GM12878 (cell line): ENCODE measurements at regions of chr1 and their contacts with region 1.

Region 1: DNA sequence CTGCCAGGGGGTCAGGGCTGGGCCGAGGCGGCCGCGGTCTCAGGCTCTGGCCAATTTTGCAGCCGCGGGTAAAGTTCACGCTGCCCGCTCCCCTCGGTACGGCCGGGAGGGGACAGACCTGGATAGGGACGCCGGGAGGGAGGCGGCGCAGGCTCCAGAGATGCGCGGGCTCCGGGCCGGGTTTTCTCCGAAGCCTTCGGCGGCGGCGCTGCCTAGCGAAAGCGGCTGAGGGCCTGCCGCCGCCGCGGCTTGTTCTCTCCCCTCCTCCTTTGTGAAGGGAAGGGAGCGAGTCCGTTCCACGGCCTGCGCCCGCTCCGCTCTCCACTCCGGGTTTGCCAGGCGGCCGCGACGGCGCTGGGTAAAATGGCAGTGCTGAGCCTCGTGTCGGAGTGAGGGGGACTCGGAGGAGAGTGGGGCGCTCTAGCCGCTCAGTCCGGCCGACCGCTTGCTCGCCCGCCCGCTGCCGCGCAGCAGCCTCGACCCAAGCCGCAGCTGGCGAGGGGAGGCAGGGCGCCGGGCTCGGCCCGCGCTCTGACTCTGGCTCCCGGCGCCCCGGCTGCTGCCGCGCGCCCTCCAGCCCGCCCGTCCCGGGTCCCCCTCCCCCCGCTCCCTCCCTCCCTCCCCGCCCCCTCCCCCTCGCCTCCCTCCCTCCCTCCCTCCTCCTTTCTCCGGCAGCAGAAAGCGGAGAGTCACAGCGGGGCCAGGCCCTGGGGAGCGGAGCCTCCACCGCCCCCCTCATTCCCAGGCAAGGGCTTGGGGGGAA is at the start of gene ARID1A:
- DNase-seq: peak; percentile 82
- ATAC-seq: peak; percentile 69
- H3K4me3 ChIP-seq: peak within 1 kb of the TSS; percentile 98
- H3K27ac ChIP-seq: peak within 1 kb of the TSS; percentile 98
- H3K4me1 ChIP-seq: peaks cover 13% of the 10 kb centered on the region
- H3K27me3 ChIP-seq: no peaks in the 10 kb centered on the region
- CTCF ChIP-seq: no peak
- EP300 ChIP-seq: peak in 1 of 2 experiments; percentile 74; a peak in 1 of 4 replicates
- POLR2A ChIP-seq: peak; percentile 97
- RAD21 ChIP-seq: peak; percentile 27; the same call in 1 of the 2 replicates
- polyA plus RNA-seq, gene ARID1A: 10.0 to 24.5 TPM

Region 2: GRCh38 chr1:26614655-26615411 is 80.7 kb before region 1 on chr1:
- CTCF ChIA-PET with region 1: interaction called, 3 read pairs
- POLR2A ChIA-PET with region 1: interaction called, 5 read pairs
- RAD21 ChIA-PET with region 1: interaction called, 7 read pairs
- SMC1A ChIA-PET with region 1: interaction called, 12 read pairs
- in situ Hi-C with region 1: no loop called
- intact Hi-C with region 1: no loop called
- DNase-seq: no peak
- ATAC-seq: peak; percentile 46; the same call in 2 of the 3 replicates
- H3K4me3 ChIP-seq: no peak overlapping the region
- H3K27ac ChIP-seq: no peak overlapping the region
- H3K4me1 ChIP-seq: peaks cover 13% of the 10 kb centered on the region
- H3K27me3 ChIP-seq: no peaks in the 10 kb centered on the region
- CTCF ChIP-seq: no peak
- EP300 ChIP-seq: no peak
- POLR2A ChIP-seq: no peak
- RAD21 ChIP-seq: no peak

Region 3: DNA sequence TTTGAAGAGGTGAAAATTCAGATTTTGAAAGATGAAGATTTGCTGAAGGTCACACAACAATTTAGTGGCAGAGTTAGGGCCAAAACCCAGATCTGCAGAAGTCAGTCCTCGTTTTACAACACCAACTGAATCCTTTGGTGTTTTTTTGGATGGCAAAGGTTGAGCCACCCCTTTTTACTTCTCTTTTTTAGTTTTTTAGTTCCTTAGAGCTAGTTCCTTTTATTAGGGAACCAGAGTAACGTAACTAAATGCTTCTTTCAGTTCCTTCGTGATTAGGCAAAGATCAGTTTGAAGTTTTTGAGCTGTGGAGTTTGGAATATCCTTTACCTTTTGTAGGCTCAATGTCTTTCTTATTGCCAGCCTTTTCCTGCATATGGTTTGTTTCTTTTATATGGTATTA is 67.6 kb before region 1 on chr1:
- CTCF ChIA-PET with region 1: interaction called, 6 read pairs
- POLR2A ChIA-PET with region 1: interaction called, 13 read pairs
- RAD21 ChIA-PET with region 1: interaction called, 25 read pairs
- SMC1A ChIA-PET with region 1: interaction called, 10 read pairs
- in situ Hi-C with region 1: no loop called
- intact Hi-C with region 1: no loop called
- DNase-seq: no peak
- ATAC-seq: peak; percentile 60
- H3K4me3 ChIP-seq: no peak overlapping the region
- H3K27ac ChIP-seq: peak overlapping the region; percentile 64
- H3K4me1 ChIP-seq: peaks cover 11% of the 10 kb centered on the region
- H3K27me3 ChIP-seq: no peaks in the 10 kb centered on the region
- CTCF ChIP-seq: no peak
- EP300 ChIP-seq: no peak
- POLR2A ChIP-seq: no peak
- RAD21 ChIP-seq: no peak

Region 4: DNA sequence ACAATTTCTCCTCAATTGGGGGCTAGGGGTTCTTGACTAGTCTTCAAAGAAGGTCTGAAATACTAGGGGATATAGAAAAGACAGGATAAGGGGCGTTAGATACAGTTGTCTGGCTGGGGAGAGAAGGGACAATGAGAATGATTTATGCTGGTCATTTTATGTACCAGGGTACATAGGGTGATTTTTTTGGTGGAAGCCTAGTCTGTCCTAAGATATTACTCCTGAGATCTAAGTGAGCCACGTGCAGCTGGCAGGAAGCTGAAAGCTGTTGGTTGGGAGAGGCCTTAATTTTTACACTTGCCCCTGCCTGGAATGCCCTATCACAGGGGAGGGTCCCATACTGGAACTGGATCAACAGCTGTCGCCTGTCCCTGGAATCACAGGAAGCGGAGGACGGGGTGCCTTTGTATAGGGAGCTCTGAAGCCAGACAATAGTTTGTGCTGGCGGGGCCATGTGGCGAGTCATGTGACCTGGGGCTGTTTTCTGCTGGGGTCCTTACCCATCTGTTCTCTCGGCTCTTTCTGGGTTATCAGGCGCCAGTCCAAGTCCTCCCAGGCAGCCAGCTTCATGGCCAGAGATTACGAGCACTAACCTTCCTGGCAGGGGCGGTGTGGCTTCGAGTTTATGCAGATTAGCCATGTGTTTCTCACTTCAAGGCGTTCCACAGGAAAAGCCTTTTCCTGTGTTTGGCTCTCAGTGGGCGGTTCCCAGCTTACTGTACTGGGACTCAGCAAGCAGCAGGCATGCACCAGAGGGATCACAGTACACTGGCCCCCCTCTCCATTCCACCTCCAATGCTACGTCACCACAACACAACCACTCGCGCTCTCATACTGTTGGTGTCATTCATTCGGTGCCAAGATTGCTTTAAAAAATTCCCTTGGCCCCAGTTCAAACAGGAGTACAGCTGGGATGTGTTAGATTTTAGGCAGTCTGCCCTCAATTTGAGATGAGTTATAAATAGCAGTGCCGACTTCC is 27.8 kb after region 1 on chr1:
- CTCF ChIA-PET with region 1: interaction called, 50 read pairs
- POLR2A ChIA-PET with region 1: interaction called, 23 read pairs
- RAD21 ChIA-PET with region 1: interaction called, 15 read pairs
- SMC1A ChIA-PET with region 1: interaction called, 128 read pairs
- in situ Hi-C with region 1: no loop called
- intact Hi-C with region 1: no loop called
- DNase-seq: no peak
- ATAC-seq: peak; percentile 61
- H3K4me3 ChIP-seq: peak overlapping the region; percentile 49
- H3K27ac ChIP-seq: peak overlapping the region; percentile 72
- H3K4me1 ChIP-seq: peaks cover 53% of the 10 kb centered on the region
- H3K27me3 ChIP-seq: no peaks in the 10 kb centered on the region
- CTCF ChIP-seq: no peak
- EP300 ChIP-seq: no peak
- POLR2A ChIP-seq: 0 out of 2 replicates have a peak, but pooled peaks have one; percentile 36
- RAD21 ChIP-seq: no peak

Region 5: GRCh38 chr1:26730695-26731094 is 35.2 kb after region 1 on chr1:
- CTCF ChIA-PET with region 1: interaction called, 50 read pairs
- POLR2A ChIA-PET with region 1: interaction called, 23 read pairs
- RAD21 ChIA-PET with region 1: interaction called, 12 read pairs
- SMC1A ChIA-PET with region 1: interaction called, 128 read pairs
- in situ Hi-C with region 1: no loop called
- intact Hi-C with region 1: no loop called
- DNase-seq: no peak
- ATAC-seq: no peak
- H3K4me3 ChIP-seq: no peak overlapping the region
- H3K27ac ChIP-seq: no peak overlapping the region
- H3K4me1 ChIP-seq: peaks cover 17% of the 10 kb centered on the region
- H3K27me3 ChIP-seq: no peaks in the 10 kb centered on the region
- CTCF ChIP-seq: no peak
- EP300 ChIP-seq: no peak
- POLR2A ChIP-seq: no peak
- RAD21 ChIP-seq: no peak

Region 6: DNA sequence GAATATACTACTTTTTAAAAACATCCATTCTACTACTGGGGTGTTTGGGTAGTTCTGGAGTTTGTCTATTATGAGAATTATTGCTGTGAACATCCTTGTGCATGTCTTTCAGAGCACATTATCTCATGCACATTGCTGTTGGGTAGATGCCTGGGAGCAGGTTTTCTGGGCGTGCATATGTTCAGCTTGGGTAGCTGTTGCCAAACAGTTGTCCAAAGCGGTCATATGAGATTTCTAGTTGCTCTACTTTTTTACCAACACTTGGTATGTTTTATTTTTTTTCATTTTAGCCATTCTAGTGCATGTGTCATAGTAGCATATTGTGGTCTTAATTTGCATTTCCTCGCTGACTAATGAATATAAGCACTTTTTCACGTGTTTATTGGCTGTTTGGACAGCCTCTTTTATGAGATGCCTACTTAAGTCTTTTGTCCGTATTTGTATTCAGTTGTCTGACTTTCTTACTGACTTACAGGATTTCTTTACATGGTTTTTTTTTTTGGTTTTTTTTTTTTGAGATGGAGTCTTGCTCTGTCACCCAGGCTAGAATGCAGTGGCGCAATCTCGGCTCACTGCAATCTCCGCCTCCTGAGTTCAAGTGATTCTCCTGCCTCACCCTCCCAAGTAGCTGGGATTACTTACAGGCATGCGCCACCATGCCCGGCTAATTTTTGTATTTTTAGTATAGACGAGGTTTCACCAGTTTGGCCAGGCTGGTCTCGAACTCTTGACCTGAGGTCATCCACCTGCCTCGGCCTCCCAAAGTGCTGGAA is 149.1 kb after region 1 on chr1:
- CTCF ChIA-PET with region 1: no interaction called
- POLR2A ChIA-PET with region 1: no interaction called
- RAD21 ChIA-PET with region 1: no interaction called
- SMC1A ChIA-PET with region 1: no interaction called
- in situ Hi-C with region 1: no loop called
- intact Hi-C with region 1: no loop called
- DNase-seq: no peak
- ATAC-seq: no peak
- H3K4me3 ChIP-seq: no peak overlapping the region
- H3K27ac ChIP-seq: no peak overlapping the region
- H3K4me1 ChIP-seq: peaks cover 6% of the 10 kb centered on the region
- H3K27me3 ChIP-seq: no peaks in the 10 kb centered on the region
- CTCF ChIP-seq: no peak
- EP300 ChIP-seq: no peak
- POLR2A ChIP-seq: no peak
- RAD21 ChIP-seq: no peak